Left ventricle myocardium superior (tissue), 1 donor: ENCODE measurements at regions of chr5 and their contacts with region 1.

Region 1: DNA sequence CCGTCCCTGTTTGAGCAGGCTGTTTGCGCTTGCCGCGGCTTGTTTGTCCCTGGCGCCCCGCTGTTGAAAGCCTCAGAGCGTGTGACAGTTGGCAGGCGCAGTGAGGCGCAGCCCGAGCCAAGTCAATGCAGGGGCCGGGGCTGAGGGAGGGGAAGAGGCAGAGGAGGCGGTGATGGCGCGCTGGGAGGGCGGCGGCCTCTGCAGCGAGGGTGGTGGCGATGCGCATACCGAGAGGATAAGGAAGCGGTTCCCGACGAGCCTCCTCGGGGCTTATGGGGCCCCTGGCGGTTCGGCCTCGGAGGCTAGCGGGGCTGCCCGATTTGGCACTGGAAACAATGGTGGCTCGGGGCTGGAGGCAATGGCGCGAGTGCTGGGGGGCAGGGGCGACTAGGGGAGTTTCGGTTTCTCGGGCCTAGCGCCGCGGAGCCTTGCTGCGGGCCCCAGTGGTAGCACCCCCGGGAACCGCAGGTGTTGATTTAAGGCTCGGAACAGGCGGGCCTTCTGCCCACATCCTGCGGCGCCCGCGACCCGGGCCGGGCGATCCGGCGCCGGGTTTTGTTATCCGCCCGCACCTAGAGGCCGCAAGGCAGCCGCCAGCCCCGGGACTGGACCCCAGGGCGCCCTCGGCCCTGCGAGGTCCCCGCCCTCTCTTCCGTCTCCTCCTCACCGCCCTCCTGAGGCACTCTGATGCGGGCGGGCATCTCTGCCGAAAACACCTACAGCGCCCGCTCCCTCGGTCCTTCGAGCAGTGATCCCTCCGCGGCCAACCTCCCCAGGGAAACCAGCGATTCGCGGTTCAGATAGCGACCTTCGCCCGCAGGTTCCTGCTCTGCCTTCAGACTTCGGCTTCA is 947 bp upstream of the LNPEP start:
- DNase-seq: peak; percentile 97
- ATAC-seq: peak; percentile 88

Region 2: DNA sequence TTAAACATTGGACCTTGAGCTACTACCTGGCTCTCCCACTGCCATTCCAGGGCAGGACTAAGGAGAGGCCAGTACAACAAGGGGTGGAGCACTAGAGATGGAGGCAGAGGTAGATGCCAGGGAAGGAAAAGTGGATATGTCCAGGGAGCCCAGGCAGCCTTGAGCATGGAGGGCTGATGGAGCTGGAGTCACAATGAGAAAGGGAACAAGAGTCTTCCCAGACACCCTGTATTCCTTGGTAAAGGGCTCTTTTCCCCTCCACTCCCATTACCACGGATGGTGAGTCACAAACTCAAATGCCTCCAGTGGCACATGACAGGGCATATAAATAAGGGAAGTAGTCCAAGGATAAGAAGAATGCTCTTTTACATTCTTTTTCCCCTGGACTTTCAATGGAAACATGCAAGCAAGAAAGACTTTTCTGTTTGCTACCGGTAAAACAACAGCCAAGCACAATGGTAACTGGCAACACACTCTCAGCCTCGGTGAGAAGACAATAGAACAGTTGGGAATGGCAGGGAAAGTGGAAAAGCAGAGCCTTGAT is 143.9 kb before region 1 on chr5:
- intact Hi-C with region 1: no loop called
- DNase-seq: no peak
- ATAC-seq: no peak

Region 3: GRCh38 chr5:96876292-96876850 is 58.6 kb before region 1 on chr5 and contains the start of gene ERAP2:
- intact Hi-C with region 1: loop called (anchors 10 kb)
- DNase-seq: no peak
- ATAC-seq: peak; percentile 80
- total RNA-seq, gene ERAP2: 6.1 TPM

Region 4: GRCh38 chr5:97056263-97056662 is 121.3 kb after region 1 on chr5:
- intact Hi-C with region 1: no loop called
- DNase-seq: no peak
- ATAC-seq: no peak